Panc1 (cell line): ENCODE measurements at regions of chr7 and their contacts with region 1.

Region 1: DNA sequence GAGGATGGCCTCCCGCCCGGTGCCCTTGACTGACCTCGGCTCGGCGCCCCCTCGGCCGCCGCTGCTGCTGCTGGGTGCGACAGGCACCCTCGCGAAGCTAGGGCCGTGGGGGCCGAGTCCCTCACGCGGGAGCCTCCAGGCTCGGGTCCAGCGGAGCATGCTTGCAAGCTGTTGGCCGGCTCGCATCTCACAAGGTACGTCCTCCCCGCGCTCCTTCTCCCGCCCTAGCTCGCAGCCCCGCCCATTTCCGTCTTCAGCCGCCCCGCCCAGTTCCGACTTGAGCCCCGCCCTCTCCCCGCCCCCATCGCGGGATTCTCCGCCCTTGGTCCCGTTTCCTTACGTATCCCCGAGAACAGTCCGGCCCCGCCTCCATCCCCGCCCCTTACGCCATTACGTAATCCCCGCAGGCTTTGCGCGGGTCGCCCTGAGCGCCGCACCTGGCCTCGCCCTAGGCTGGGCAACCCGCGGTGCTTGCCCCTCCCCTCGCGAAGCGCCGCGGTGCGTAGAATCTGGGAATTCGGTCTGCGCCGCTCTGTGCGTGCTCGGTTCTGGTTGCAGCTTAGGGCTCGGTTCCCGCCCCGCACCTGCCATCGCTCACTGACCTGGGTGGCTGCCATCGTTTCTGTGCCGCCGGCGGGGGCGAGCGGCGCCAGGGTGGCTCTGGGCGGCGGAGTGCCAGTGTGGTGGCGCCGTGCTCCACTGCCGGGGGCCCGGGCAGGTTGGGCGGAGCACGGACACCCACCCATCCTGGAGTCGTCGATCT is at the start of gene ABHD11:
- DNase-seq: peak; percentile 94
- ATAC-seq: peak; percentile 85
- H3K4me3 ChIP-seq: peak within 1 kb of the TSS; percentile 78 to 93
- H3K27ac ChIP-seq: peak within 1 kb of the TSS; percentile 96
- H3K4me1 ChIP-seq: peaks cover 65% of the 10 kb centered on the region
- H3K27me3 ChIP-seq: no peaks in the 10 kb centered on the region
- CTCF ChIP-seq: no peak
- total RNA-seq, gene ABHD11: 54.2 TPM

Region 2: DNA sequence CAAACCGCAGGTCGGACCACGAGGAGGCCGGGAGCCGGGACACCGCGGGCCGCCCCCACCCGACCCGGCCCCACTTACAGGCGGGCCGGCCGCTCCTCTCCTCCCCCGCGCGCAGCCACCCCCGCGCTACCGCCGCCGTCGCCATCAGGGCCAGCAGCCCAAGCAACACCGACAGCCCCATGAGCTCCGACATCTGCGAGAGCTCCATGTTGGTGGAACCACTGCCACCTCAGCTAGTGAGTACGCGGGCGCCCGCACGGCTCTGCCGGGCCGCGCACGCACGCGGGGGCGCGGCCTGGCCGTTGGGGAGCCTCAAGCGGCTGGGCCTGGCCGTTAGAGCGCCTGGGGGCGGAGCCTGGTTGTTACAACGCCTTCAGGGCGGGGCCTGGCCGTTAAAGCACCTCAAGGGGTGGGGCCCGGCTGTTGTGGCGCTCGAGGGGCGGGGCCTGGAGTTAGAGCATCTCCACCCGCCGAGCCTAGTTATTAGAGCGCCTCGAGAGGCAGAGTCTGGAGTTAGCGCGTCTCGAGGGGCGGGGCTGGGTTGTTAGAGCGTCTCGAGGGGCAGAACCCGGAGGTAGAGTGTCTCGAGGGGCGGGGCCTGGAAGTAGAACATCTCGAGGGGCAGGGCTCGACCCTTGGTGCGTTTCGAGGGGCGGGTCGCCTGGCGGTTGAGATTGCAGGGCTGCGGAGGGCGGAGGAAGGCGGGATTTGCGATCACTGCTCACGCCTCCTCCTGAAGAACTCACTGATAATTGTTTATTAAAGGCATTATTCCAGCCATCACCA is 160.3 kb before region 1 on chr7 and contains the start of gene TBL2:
- CTCF ChIA-PET with region 1: no interaction called
- POLR2A ChIA-PET with region 1: interaction called, 11 read pairs
- in situ Hi-C with region 1: no loop called
- intact Hi-C with region 1: no loop called
- DNase-seq: peak; percentile 94
- ATAC-seq: peak; percentile 95
- H3K4me3 ChIP-seq: peak within 1 kb of the TSS; percentile 73 to 99
- H3K27ac ChIP-seq: peak within 1 kb of the TSS; percentile 91
- H3K4me1 ChIP-seq: peaks cover 12% of the 10 kb centered on the region
- H3K27me3 ChIP-seq: no peaks in the 10 kb centered on the region
- CTCF ChIP-seq: no peak
- total RNA-seq, gene TBL2: 60.1 TPM

Region 3: DNA sequence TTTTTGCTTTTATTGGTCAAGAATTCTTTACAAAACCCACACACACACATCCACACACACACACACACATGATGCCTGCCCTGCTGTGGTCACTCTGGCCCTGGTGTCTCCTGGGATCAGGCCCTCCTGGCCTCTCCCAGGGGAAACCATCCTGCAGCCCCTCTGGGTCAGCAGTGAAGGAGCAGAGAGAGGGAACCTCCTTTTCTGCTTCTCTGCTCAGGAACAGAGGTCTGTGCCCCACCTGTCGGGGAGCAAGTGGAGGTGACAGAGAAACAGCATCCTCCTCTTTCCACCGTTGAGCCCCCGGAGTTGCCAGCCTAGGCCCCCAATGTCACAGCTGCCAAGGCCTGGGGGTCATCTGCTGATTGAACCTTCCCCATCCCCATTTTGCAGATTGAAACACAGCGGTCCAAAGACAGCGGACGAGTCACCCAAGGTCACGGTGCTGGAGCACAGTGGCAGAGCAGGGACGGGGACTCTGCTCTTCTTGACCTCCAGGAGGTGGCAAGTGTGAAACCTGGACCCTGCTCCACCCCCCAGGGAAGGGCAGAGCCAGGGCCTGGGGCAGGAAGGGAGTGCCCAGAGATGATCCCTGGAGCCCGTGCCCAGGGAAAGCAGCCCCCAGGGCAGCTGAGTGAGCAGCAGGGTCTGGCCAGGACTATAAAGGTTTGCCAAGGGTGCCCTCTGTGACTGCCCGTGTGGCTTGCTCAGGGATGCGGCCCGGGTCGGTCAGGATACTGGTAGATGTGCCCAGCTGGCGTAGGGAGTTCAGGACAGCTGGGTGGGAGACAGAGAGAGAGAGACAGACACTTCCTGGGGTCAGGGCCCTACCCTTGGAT is 145.4 kb before region 1 on chr7:
- CTCF ChIA-PET with region 1: no interaction called
- POLR2A ChIA-PET with region 1: no interaction called
- in situ Hi-C with region 1: no loop called
- intact Hi-C with region 1: no loop called
- DNase-seq: no peak
- ATAC-seq: no peak
- H3K4me3 ChIP-seq: no peak overlapping the region
- H3K27ac ChIP-seq: no peak overlapping the region
- H3K4me1 ChIP-seq: no peaks in the 10 kb centered on the region
- H3K27me3 ChIP-seq: no peaks in the 10 kb centered on the region
- CTCF ChIP-seq: no peak

Region 4: GRCh38 chr7:73667344-73668102 is 71.3 kb before region 1 on chr7 and contains the start of gene VPS37D:
- CTCF ChIA-PET with region 1: interaction called, 4 read pairs
- POLR2A ChIA-PET with region 1: interaction called, 11 read pairs
- in situ Hi-C with region 1: no loop called
- intact Hi-C with region 1: no loop called
- DNase-seq: no peak
- ATAC-seq: peak; percentile 92
- H3K4me3 ChIP-seq: peak within 1 kb of the TSS; percentile 45 to 73
- H3K27ac ChIP-seq: peak within 1 kb of the TSS; percentile 58; the same call in 1 of the 2 replicates
- H3K4me1 ChIP-seq: peaks cover 8% of the 10 kb centered on the region
- H3K27me3 ChIP-seq: no peaks in the 10 kb centered on the region
- CTCF ChIP-seq: peak; percentile 97
- total RNA-seq, gene VPS37D: 4.4 TPM

Region 5: DNA sequence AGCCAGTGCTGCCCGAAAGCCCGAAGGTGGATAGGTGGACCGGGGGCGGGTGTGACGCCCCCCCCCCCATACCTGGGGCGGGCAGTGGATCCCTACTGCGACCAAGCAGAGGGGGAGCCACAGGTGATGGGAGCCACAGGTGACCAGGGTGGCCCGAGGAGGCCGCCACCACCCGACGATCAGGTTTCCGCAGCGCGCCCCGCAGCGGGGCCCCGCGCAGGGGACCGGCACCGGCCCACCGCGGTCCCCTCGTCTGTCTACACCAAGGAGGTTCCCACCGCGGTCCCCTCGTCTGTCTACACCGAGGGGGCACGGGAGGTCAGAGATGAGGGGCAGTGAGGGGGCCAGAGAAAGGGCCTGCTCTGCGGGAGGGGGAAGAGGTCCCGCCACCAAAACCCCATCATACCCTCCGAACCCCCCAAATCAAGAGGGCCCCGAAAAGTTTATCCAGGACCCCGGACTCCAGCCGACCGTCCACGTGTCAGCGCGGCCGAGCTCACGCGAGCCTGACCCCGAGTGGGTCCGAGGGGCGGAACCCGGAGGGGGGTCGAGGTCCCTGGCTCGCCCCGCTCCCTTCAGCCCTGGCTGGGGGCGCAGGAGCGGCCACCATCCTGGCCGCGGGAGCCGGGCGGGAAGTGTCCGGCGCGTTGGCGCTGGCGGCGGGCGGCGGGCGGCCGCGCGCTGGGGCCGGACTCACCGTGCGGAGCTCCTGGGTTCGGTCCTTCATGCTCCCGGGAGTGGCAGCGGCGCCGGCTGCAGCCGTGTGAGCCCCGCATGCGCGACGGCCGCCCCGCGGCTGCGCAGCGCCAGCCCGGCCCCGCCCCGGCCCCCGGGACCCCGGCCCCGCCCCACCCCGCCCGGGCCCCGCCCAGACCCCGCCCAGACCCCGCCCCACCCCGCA is 19.6 kb before region 1 on chr7 and contains the start of gene STX1A:
- CTCF ChIA-PET with region 1: interaction called, 4 read pairs
- POLR2A ChIA-PET with region 1: interaction called, 10 read pairs
- in situ Hi-C with region 1: no loop called
- intact Hi-C with region 1: no loop called
- DNase-seq: no peak
- ATAC-seq: peak; percentile 63
- H3K4me3 ChIP-seq: peak within 1 kb of the TSS; percentile 82 to 96
- H3K27ac ChIP-seq: peak within 1 kb of the TSS; percentile 96
- H3K4me1 ChIP-seq: peaks cover 62% of the 10 kb centered on the region
- H3K27me3 ChIP-seq: no peaks in the 10 kb centered on the region
- CTCF ChIP-seq: no peak
- total RNA-seq, gene STX1A: 80.9 TPM

Region 6: GRCh38 chr7:73828107-73828803 is 89.5 kb after region 1 on chr7:
- CTCF ChIA-PET with region 1: interaction called, 5 read pairs
- POLR2A ChIA-PET with region 1: interaction called, 13 read pairs
- in situ Hi-C with region 1: no loop called
- intact Hi-C with region 1: no loop called
- DNase-seq: peak; percentile 88
- ATAC-seq: peak; percentile 62
- H3K4me3 ChIP-seq: peak overlapping the region in 1 of 2 experiments; percentile 33; a peak in 2 of 4 replicates
- H3K27ac ChIP-seq: peak overlapping the region; percentile 96
- H3K4me1 ChIP-seq: peaks cover 48% of the 10 kb centered on the region
- H3K27me3 ChIP-seq: no peaks in the 10 kb centered on the region
- CTCF ChIP-seq: no peak

Region 7: DNA sequence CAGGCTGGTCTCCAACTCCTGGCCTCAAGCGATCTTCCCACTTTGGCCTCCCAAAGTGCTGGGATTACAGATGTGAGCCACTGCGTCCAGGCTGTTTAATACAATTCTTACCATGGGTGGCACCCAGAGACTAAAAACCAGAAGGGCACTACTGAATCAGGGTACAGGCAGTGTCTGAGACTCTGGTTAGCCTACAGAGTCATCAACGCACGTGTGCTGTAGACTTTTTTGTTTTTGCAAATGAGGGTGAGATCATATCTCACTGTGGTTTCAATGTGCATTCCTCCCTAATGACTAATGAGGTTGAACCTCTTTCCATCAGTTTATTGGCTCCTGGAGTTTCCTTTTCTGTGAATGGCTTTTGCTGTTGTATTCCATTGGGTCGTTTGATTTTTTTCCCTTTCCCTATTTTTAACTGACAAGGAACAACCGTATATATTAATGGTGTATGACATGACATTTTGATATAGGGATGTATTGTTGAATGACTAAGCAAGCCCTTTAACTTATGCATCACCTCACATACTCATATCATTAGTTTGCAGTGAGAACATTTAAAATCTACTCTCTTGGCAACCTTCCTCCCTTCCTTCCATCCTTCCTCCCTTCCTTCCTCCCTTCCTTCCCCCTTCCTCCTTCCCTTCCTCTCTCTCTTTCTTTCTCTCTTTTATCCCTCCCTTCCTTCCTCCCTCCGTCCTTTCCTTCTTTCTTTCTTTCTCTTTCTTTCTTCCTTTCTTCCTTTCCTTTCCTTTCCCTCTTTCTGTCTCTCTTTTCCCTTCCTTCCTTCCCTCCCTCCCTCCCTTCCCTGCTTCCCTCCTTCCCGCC is 112.8 kb after region 1 on chr7:
- CTCF ChIA-PET with region 1: no interaction called
- POLR2A ChIA-PET with region 1: interaction called, 4 read pairs
- in situ Hi-C with region 1: no loop called
- intact Hi-C with region 1: loop called (anchors 2 kb)
- DNase-seq: peak; percentile 100
- ATAC-seq: peak; percentile 87
- H3K4me3 ChIP-seq: 0 out of 4 replicates have a peak overlapping the region, but pooled peaks of 1 of the 2 experiments have one; percentile 3
- H3K27ac ChIP-seq: peak overlapping the region; percentile 79
- H3K4me1 ChIP-seq: peaks cover 37% of the 10 kb centered on the region
- H3K27me3 ChIP-seq: no peaks in the 10 kb centered on the region
- CTCF ChIP-seq: no peak